OCI-LY7 (cell line): ENCODE measurements at regions of chr1 and their contacts with region 1.

Region 1: GRCh38 chr1:75724472-75725022 is at the start of gene ACADM:
- DNase-seq: peak; percentile 91
- H3K4me3 ChIP-seq: peak within 1 kb of the TSS; percentile 90
- H3K27ac ChIP-seq: peak within 1 kb of the TSS; percentile 95
- H3K4me1 ChIP-seq: peaks cover 34% of the 10 kb centered on the region
- CTCF ChIP-seq: no peak
- total RNA-seq, gene ACADM: 137 and 160 TPM in 2 replicates

Region 2: GRCh38 chr1:74733604-74734484 is 990.7 kb before region 1 on chr1:
- CTCF ChIA-PET with region 1: no interaction called
- POLR2A ChIA-PET with region 1: interaction called, 5 read pairs
- intact Hi-C with region 1: loop called (anchors 2 kb)
- DNase-seq: peak; percentile 87
- H3K4me3 ChIP-seq: peak overlapping the region; percentile 95
- H3K27ac ChIP-seq: peak overlapping the region; percentile 86
- H3K4me1 ChIP-seq: peaks cover 21% of the 10 kb centered on the region
- CTCF ChIP-seq: peak; percentile 87

Region 3: GRCh38 chr1:75710832-75711231 is 13.7 kb before region 1 on chr1:
- CTCF ChIA-PET with region 1: no interaction called
- POLR2A ChIA-PET with region 1: interaction called, 11 read pairs
- intact Hi-C with region 1: no loop called
- DNase-seq: no peak
- H3K4me3 ChIP-seq: no peak overlapping the region
- H3K27ac ChIP-seq: no peak overlapping the region
- H3K4me1 ChIP-seq: no peaks in the 10 kb centered on the region
- CTCF ChIP-seq: no peak

Region 4: GRCh38 chr1:75785983-75786853 is 61.7 kb after region 1 on chr1 and contains the start of gene RABGGTB:
- CTCF ChIA-PET with region 1: no interaction called
- POLR2A ChIA-PET with region 1: interaction called, 74 read pairs
- intact Hi-C with region 1: loop called (anchors 1 kb)
- DNase-seq: peak; percentile 98
- H3K4me3 ChIP-seq: peak within 1 kb of the TSS; percentile 93
- H3K27ac ChIP-seq: peak within 1 kb of the TSS; percentile 94
- H3K4me1 ChIP-seq: peaks cover 41% of the 10 kb centered on the region
- CTCF ChIP-seq: no peak
- total RNA-seq, gene RABGGTB: 128 and 132 TPM in 2 replicates